Vagina (tissue), 2 donors: ENCODE measurements at regions of chr13 and their contacts with region 1.

Region 1: DNA sequence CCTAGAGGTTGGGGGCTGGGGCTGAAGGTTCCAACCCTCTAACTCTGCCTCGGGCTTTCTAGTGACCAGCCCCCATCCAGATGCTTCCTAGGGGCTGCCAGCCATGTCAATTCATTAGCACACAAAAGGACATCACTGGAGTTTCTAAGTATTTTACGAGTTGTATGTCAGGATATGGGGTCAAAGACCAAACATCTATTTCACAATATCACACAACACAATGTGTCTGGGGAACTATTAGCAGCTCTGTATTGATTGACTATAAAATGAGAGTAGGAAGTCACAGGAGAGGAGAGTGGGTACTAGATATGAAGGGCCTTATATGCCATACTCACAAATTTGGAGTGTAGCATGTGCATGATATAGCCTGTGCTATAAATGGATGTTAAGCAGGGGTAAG is 42.1 kb downstream of the LPAR6 start:
- DNase-seq: no peak
- H3K4me3 ChIP-seq: no peak overlapping the region
- H3K27ac ChIP-seq: no peak overlapping the region
- H3K4me1 ChIP-seq: no peaks in the 10 kb centered on the region
- H3K27me3 ChIP-seq: no peaks in the 10 kb centered on the region
- CTCF ChIP-seq: no peak
- POLR2A ChIP-seq: no peak

Region 2: GRCh38 chr13:48393698-48394085 is 22.9 kb after region 1 on chr13:
- intact Hi-C with region 1: loop called (anchors 2 kb)
- DNase-seq: no peak
- H3K4me3 ChIP-seq: no peak overlapping the region
- H3K27ac ChIP-seq: no peak overlapping the region
- H3K4me1 ChIP-seq: peaks cover 10% of the 10 kb centered on the region
- H3K27me3 ChIP-seq: no peaks in the 10 kb centered on the region
- CTCF ChIP-seq: no peak
- POLR2A ChIP-seq: no peak

Region 3: GRCh38 chr13:48505597-48506091 is 134.8 kb after region 1 on chr13:
- intact Hi-C with region 1: no loop called
- DNase-seq: no peak
- H3K4me3 ChIP-seq: no peak overlapping the region
- H3K27ac ChIP-seq: peak overlapping the region; percentile 84
- H3K4me1 ChIP-seq: peaks cover 53% of the 10 kb centered on the region
- H3K27me3 ChIP-seq: no peaks in the 10 kb centered on the region
- CTCF ChIP-seq: no peak
- POLR2A ChIP-seq: no peak